ENCODE measurements at regions of chr20 and their contacts with region 1.

Region 1: DNA sequence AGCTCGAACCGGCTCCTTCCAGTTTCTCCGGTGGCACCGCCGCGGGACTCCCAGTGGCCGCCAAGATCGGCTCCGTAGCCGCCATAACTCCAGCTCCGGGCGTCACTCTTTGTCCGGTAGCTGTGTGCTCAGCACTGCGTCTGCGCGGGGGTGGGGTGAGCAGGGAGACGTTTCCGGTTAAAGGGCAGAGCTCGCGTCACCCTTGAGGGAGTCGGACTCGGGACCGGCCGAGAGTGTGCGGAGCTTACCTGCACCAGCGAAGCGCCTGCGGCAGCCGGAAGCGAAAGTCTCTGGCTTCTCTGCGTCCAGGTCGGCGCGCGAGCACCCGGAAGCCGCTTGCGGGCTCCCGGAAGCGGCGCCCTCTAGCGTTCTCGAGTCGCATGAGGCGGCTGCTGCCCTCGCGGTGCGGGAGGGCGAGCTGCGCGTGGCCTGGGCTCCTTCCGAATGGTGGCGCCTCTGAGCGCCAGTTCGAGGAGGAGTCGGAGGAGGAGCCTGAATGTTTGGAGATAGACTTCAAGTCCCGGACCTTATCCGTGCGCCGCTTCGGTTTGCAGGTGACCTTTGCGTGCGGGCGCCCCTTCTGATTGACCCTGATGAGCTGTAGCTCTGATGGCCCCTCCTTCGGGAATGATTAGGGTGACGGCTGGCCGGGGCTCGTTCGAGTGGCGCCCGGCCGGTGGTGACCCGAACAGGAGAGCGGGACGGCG is at the start of gene SCAND1:
- H3K4me3 ChIP-seq: peak within 1 kb of the TSS; percentile 77
- H3K27ac ChIP-seq: peak within 1 kb of the TSS; percentile 89
- H3K4me1 ChIP-seq: no peaks in the 10 kb centered on the region
- CTCF ChIP-seq: peak; percentile 100

Region 2: GRCh38 chr20:35942243-35942642 is 12.1 kb before region 1 on chr20:
- CTCF ChIA-PET with region 1: interaction called, 9 read pairs
- POLR2A ChIA-PET with region 1: interaction called, 10 read pairs
- H3K4me3 ChIP-seq: no peak overlapping the region
- H3K27ac ChIP-seq: no peak overlapping the region
- H3K4me1 ChIP-seq: no peaks in the 10 kb centered on the region
- CTCF ChIP-seq: no peak

Region 3: DNA sequence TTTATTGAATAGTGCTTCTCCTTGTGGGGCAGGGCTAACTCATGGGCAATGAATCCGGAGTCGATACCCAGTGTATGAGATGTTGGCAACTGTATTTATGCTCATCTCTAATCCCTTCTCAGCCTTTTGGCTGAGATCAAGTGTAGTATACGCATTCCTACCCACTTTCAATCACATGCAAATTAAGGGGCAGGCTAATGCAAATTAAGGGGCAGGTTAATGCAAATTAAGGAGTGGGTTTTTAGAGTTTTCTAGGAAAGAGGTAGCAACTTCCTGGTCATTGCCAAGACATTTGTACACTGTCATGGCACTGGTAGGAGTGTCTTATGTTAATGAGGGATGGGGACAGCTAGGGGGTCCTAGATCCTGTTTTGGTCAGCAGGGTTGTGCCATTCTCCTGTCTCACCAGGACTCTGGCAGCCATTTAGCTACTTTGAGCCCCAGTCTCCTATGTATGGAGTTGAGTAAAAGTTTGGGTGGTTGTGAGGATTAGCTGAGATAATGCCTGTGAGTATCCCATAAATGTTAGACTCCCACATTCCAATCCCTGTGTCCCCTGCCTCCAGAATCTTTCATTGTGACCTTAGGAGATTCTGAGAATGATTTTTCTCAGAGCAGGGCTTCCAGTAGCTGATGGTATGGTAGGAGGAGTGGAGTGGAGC is 13.8 kb after region 1 on chr20 and contains the start of gene CNBD2:
- CTCF ChIA-PET with region 1: interaction called, 26 read pairs
- POLR2A ChIA-PET with region 1: interaction called, 4 read pairs
- H3K4me3 ChIP-seq: no peak within 1 kb of the TSS
- H3K27ac ChIP-seq: no peak within 1 kb of the TSS
- H3K4me1 ChIP-seq: no peaks in the 10 kb centered on the region
- CTCF ChIP-seq: no peak

Region 4: GRCh38 chr20:35978041-35978513 is 23.7 kb after region 1 on chr20:
- CTCF ChIA-PET with region 1: interaction called, 15 read pairs
- POLR2A ChIA-PET with region 1: interaction called, 4 read pairs
- H3K4me3 ChIP-seq: no peak overlapping the region
- H3K27ac ChIP-seq: no peak overlapping the region
- H3K4me1 ChIP-seq: no peaks in the 10 kb centered on the region
- CTCF ChIP-seq: no peak

Region 5: GRCh38 chr20:36018208-36018988 is 64.0 kb after region 1 on chr20:
- CTCF ChIA-PET with region 1: no interaction called
- POLR2A ChIA-PET with region 1: no interaction called
- H3K4me3 ChIP-seq: no peak overlapping the region
- H3K27ac ChIP-seq: no peak overlapping the region
- H3K4me1 ChIP-seq: no peaks in the 10 kb centered on the region
- CTCF ChIP-seq: no peak

Measured in HEK293 (cell line).